MCF 10A (cell line): ENCODE measurements at regions of chr19 and their contacts with region 1.

Region 1: GRCh38 chr19:4400135-4400936 is at the start of gene SH3GL1:
- DNase-seq: peak; percentile 90
- H3K4me3 Mint-ChIP-seq: peak within 1 kb of the TSS; percentile 78
- H3K27ac Mint-ChIP-seq: peak within 1 kb of the TSS; percentile 94
- H3K4me1 Mint-ChIP-seq: peaks cover 33% of the 10 kb centered on the region
- H3K27me3 Mint-ChIP-seq: no peaks in the 10 kb centered on the region
- CTCF ChIP-seq: peak; percentile 98
- total RNA-seq, gene SH3GL1: 94.4 and 106 TPM in 2 replicates

Region 2: GRCh38 chr19:4342615-4343369 is 57.5 kb before region 1 on chr19:
- CTCF ChIA-PET with region 1: interaction called, 6 read pairs
- POLR2A ChIA-PET with region 1: interaction called, 20 read pairs
- intact Hi-C with region 1: no loop called
- DNase-seq: peak; percentile 100
- H3K4me3 Mint-ChIP-seq: peak overlapping the region; percentile 88
- H3K27ac Mint-ChIP-seq: peak overlapping the region; percentile 42
- H3K4me1 Mint-ChIP-seq: peaks cover 7% of the 10 kb centered on the region
- H3K27me3 Mint-ChIP-seq: no peaks in the 10 kb centered on the region
- CTCF ChIP-seq: no peak

Region 3: DNA sequence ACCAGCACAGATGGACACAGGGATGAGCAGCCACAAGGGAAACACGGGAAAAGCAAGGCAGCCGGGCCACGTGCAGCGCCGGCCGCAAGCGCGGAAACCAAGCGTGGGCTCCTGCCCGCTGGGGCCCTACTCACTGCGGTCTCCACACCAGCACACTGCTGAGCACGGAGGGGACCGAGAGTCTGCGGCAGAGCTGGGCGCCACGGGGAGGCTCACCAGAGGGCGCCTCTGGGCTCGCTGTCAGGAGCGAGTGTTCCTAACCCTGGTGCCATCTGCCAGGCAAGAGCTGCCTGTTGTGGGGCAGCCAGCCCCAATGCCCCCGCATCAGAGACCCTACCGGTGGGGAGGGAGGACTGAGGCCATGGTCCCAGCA is 30.5 kb before region 1 on chr19:
- CTCF ChIA-PET with region 1: interaction called, 16 read pairs
- POLR2A ChIA-PET with region 1: interaction called, 93 read pairs
- intact Hi-C with region 1: loop called (anchors 1 kb)
- DNase-seq: peak; percentile 77
- H3K4me3 Mint-ChIP-seq: peak overlapping the region; percentile 73
- H3K27ac Mint-ChIP-seq: no peak overlapping the region
- H3K4me1 Mint-ChIP-seq: peaks cover 24% of the 10 kb centered on the region
- H3K27me3 Mint-ChIP-seq: no peaks in the 10 kb centered on the region
- CTCF ChIP-seq: peak; percentile 59

Region 4: GRCh38 chr19:4457654-4458395 is 57.5 kb after region 1 on chr19 and contains the start of gene UBXN6:
- CTCF ChIA-PET with region 1: no interaction called
- POLR2A ChIA-PET with region 1: interaction called, 15 read pairs
- intact Hi-C with region 1: no loop called
- DNase-seq: peak; percentile 97
- H3K4me3 Mint-ChIP-seq: peak within 1 kb of the TSS; percentile 86
- H3K27ac Mint-ChIP-seq: peak within 1 kb of the TSS; percentile 85
- H3K4me1 Mint-ChIP-seq: peaks cover 22% of the 10 kb centered on the region
- H3K27me3 Mint-ChIP-seq: no peaks in the 10 kb centered on the region
- CTCF ChIP-seq: no peak
- total RNA-seq, gene UBXN6: 94.8 and 110 TPM in 2 replicates